Adrenal gland (tissue), 19 donors: ENCODE measurements at regions of chr10 and their contacts with region 1.

Region 1: DNA sequence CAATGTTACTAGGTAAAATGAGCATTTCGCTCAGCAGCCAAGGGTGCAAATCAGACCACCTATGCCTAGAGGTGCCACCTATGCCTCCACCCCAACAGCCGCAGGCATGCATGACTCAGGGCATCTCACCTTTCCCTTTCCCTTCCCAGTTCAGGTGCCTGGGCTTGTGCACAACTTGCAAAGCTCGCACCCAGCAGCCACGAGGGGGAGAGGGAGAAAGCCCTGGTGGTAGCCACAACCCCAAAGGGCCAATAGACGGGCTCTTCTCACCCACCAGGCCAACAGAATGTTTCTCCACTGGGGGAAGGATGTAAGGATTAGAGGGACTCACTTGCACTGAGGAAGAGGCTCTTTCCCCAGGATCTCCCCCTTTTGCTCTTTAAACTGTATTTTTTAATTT is 462.3 kb upstream of the PCDH15 start:
- DNase-seq: no peak
- H3K4me3 ChIP-seq: no peak overlapping the region
- H3K27ac ChIP-seq: no peak overlapping the region
- H3K4me1 ChIP-seq: no peaks in the 10 kb centered on the region
- H3K27me3 ChIP-seq: no peaks in the 10 kb centered on the region
- CTCF ChIP-seq: no peak
- POLR2A ChIP-seq: no peak

Region 2: GRCh38 chr10:55091691-55092328 is 171.5 kb before region 1 on chr10:
- intact Hi-C with region 1: loop called (anchors 5 to 10 kb)
- DNase-seq: peak in 1 of 7 donors; percentile 15
- H3K4me3 ChIP-seq: no peak overlapping the region
- H3K27ac ChIP-seq: no peak overlapping the region
- H3K4me1 ChIP-seq: no peaks in the 10 kb centered on the region
- H3K27me3 ChIP-seq: no peaks in the 10 kb centered on the region
- CTCF ChIP-seq: peak; percentile 70 to 91 (median 84)
- POLR2A ChIP-seq: no peak

Region 3: DNA sequence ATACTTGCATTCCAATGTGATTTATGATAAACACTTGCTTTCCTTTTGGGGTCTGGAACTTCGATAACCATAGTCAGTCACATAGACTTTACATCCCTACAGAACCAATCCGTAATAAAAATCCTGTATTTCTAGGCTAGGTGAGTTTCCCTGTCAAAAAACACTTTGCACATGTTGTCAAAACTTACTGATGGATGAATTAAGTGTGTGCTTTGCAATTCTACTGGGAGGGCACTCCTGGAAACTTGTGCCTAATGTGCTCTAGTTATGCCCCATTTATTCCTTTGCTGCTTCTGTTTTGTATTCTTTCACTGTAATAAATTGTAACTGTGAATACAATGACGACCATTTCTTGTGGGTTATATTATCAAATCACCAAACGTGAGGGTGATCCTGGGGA is 222.5 kb after region 1 on chr10:
- intact Hi-C with region 1: no loop called
- DNase-seq: no peak
- H3K4me3 ChIP-seq: no peak overlapping the region
- H3K27ac ChIP-seq: no peak overlapping the region
- H3K4me1 ChIP-seq: no peaks in the 10 kb centered on the region
- H3K27me3 ChIP-seq: no peaks in the 10 kb centered on the region
- CTCF ChIP-seq: no peak
- POLR2A ChIP-seq: no peak